ENCODE measurements at regions of chr6 and their contacts with region 1.

Region 1: GRCh38 chr6:17706580-17707370 is at the start of gene NUP153:
- DNase-seq: peak; percentile 100
- ATAC-seq: peak; percentile 72
- H3K4me3 ChIP-seq: peak within 1 kb of the TSS; percentile 88
- H3K27ac ChIP-seq: peak within 1 kb of the TSS; percentile 91
- H3K4me1 ChIP-seq: peaks cover 22% of the 10 kb centered on the region
- H3K27me3 ChIP-seq: no peaks in the 10 kb centered on the region
- CTCF ChIP-seq: no peak
- total RNA-seq, gene NUP153: 48.3 and 48.5 TPM in 2 replicates

Region 2: DNA sequence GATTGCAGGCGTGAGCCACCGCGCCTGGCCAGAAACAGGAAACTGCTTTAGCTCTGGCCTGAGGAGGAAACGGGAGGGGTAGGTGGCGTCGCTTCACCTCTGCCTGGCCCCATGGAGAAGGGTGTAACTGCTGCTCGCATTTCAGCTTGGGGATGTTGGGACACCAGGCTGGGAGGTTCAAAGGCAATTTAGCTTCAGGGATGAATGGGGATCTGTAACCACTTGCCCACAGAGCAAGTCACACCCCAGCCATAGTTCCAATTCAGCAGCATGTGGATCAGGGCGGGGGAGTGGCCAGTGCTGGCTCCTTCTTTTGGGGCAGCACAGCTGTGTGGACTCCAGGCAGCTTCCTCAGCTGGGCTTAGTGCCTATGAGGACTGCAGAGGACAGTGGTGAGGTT is 34.7 kb after region 1 on chr6:
- CTCF ChIA-PET with region 1: no interaction called
- POLR2A ChIA-PET with region 1: no interaction called
- intact Hi-C with region 1: no loop called
- DNase-seq: no peak
- ATAC-seq: no peak
- H3K4me3 ChIP-seq: no peak overlapping the region
- H3K27ac ChIP-seq: no peak overlapping the region
- H3K4me1 ChIP-seq: no peaks in the 10 kb centered on the region
- H3K27me3 ChIP-seq: no peaks in the 10 kb centered on the region
- CTCF ChIP-seq: no peak

Region 3: DNA sequence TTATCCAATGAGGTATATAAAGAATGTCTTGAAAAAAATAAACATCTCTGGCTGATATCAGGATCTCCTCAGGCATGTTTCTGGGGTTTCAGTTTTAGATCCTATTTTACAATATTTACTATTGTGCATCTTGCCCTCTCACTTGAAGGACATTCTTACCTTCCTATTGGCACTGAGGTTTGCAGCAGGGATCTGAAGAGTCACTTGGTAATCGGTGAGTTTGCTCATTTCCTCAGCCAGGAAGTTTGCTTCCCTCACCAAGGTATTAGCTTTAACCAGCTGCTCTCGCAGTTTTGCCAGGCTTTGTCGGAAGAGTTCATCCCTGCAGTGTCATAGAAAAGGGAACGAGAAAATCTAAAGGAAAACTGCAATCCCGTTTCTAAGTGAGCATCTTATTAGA is 101.8 kb after region 1 on chr6:
- CTCF ChIA-PET with region 1: interaction called, 4 read pairs
- POLR2A ChIA-PET with region 1: no interaction called
- intact Hi-C with region 1: loop called (anchors 10 kb)
- DNase-seq: peak; percentile 50
- ATAC-seq: peak; percentile 94
- H3K4me3 ChIP-seq: no peak overlapping the region
- H3K27ac ChIP-seq: peak overlapping the region; percentile 71
- H3K4me1 ChIP-seq: peaks cover 14% of the 10 kb centered on the region
- H3K27me3 ChIP-seq: no peaks in the 10 kb centered on the region
- CTCF ChIP-seq: no peak

Region 4: DNA sequence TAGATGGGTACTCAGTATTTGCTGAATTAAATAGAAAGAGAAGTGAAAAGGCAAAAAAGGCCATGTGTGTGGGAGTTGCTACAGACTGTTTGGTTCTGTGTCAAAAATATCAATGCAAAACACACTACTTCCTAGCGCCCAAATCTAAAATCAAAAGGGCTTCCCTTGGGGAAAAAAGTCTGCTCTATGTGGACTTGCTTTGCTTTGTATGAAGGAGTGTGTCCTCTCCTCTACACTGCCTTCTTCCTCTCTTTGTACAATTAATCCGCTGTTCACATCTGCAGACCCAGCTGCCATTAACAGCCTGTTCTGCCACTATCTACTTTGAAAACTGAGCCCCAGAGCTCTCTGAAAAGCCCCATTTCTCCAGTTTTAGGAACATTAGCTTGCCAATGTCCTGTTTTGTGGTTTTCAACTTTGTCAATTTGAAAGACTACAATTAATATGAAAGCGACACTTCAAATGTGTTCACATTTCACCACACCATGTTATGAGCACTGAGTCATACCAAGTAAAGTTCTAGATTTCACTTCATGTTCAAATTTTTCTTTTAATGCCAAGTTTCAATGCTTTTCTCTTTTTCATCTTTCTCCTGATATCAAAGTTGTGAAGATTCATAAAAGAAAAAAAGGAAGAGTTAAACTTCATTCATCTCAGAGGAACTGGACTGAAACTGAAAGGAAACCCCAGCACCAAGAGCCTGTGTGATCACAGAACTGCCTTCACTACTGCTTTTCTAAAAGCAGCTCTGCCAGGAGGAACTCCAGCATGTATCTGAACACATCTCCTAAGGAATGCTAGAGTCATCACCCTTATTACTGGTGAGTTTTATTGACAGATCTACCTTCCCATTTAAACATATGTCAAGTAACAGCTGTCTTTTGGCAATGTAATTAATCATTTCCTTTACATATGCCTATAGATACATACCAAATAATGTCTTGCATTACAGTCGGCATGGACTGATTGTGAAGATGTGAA is 178.0 kb after region 1 on chr6:
- CTCF ChIA-PET with region 1: no interaction called
- POLR2A ChIA-PET with region 1: no interaction called
- intact Hi-C with region 1: no loop called
- DNase-seq: peak; percentile 39
- ATAC-seq: peak; percentile 63
- H3K4me3 ChIP-seq: no peak overlapping the region
- H3K27ac ChIP-seq: no peak overlapping the region
- H3K4me1 ChIP-seq: peaks cover 19% of the 10 kb centered on the region
- H3K27me3 ChIP-seq: no peaks in the 10 kb centered on the region
- CTCF ChIP-seq: no peak

Region 5: DNA sequence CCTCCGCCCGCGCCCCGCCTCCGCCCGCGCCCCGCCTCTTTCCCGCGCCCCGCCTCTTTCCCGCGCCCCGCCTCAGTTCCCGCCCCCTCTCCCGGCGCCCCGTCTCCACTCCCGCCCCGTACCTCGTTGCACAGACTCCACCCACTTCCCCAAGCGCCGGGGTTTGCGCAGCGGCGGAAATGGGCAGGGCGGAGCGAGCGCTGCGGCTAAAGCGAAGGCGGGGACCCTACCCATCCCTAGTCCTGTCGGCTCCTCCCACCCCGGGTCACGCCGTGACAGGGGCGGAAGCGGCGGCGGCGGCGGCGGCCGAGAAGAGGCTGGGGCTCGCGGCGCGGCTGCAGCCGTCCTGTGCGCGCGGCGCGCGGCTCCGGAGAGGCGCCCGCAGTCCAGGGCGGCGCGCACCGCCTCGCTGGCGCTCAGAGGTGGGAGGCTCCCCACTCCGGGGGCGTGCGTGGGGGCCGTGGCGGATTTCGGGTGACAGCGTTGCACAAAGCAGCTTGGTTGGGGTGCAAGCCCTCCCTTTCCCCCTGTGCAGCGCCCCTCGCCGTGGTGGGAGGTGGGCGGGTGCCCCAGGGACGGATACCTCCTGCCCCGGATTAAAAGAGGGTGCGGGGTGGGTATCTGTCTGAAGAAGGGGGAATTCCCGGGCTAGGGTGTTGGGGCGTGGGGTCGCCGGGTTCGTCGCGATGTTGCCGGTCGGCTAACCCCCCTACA is 448.5 kb after region 1 on chr6 and contains the start of gene KDM1B:
- CTCF ChIA-PET with region 1: no interaction called
- POLR2A ChIA-PET with region 1: no interaction called
- intact Hi-C with region 1: loop called (anchors 5 kb)
- DNase-seq: peak; percentile 97
- ATAC-seq: peak; percentile 91
- H3K4me3 ChIP-seq: peak within 1 kb of the TSS; percentile 93
- H3K27ac ChIP-seq: peak within 1 kb of the TSS; percentile 52
- H3K4me1 ChIP-seq: peaks cover 20% of the 10 kb centered on the region
- H3K27me3 ChIP-seq: no peaks in the 10 kb centered on the region
- CTCF ChIP-seq: no peak
- total RNA-seq, gene KDM1B: 25.0 and 31.1 TPM in 2 replicates

Measured in PC-3 (cell line).